Aorta (tissue), 5 donors: ENCODE measurements at regions of chr17 and their contacts with region 1.

Region 1: DNA sequence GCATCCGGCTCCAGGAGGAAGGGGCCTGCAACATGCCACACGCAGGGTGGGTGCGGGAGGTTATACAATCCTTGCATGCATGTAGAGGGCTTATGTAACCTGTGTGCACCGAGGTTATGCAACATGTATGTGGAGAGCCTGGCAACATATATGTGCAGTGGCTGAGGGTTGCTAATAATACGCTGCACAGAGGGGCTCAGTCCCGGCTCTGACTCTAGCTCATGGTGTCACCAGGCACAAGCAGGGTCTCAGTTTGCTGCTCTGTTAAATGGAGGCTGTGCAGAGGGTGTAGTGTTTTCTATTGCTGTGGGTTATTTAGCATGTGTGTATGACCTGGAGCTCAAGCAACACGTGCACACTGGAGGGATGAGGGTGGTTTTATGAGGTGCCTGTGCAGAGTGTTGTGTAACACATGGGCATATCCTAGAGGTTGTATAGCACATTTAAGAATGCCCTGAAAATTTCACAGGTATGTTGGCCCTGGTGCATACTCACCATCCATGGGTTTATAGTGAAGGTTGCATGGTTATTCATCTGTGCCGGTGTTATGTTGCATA is 13.3 kb downstream of the THRA start:
- DNase-seq: no peak
- ATAC-seq: no peak
- H3K4me3 ChIP-seq: no peak overlapping the region
- H3K27ac ChIP-seq: peak overlapping the region in 1 of 2 donors; percentile 65
- H3K4me1 ChIP-seq: peaks cover 0 to 3% of the 10 kb centered on the region in 2 donors
- H3K27me3 ChIP-seq: no peaks in the 10 kb centered on the region

Region 2: GRCh38 chr17:40026816-40027613 is 49.0 kb before region 1 on chr17:
- intact Hi-C with region 1: no loop called
- DNase-seq: peak; percentile 85 to 93
- ATAC-seq: peak; percentile 92
- H3K4me3 ChIP-seq: no peak overlapping the region
- H3K27ac ChIP-seq: no peak overlapping the region
- H3K4me1 ChIP-seq: no peaks in the 10 kb centered on the region
- H3K27me3 ChIP-seq: no peaks in the 10 kb centered on the region

Region 3: DNA sequence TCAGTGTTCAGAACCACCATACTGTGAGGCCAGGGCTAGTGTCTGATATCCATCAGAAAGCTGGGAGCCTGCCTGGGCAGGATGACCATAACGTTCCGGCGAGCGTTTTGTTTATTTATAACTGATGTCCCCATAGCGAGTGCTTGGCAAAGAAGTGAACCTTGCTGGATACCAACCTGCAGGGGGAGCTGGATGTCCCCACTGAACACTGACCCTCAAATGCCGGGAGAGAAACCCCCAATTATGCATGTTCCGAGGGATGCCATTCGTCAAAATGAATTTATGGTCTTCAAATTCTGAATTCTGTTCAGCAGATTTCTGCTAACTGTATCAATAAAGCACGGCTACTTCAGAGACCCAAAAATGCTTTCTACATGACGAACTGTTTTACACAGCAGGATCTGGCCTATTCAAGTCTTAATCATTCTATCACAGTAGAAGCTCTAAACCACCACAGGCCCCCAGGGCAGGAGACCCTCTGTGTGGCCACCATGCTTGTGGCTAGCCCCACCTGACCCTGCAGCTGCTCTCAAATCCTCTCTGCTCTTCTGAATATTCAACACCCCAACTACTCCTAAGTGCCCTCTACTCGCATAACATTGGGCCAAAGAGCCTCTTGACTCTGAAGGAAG is 37.0 kb before region 1 on chr17:
- intact Hi-C with region 1: no loop called
- DNase-seq: peak; percentile 80 to 85
- ATAC-seq: peak; percentile 91
- H3K4me3 ChIP-seq: no peak overlapping the region
- H3K27ac ChIP-seq: peak overlapping the region in 1 of 2 donors; percentile 85
- H3K4me1 ChIP-seq: no peaks in the 10 kb centered on the region
- H3K27me3 ChIP-seq: no peaks in the 10 kb centered on the region

Region 4: DNA sequence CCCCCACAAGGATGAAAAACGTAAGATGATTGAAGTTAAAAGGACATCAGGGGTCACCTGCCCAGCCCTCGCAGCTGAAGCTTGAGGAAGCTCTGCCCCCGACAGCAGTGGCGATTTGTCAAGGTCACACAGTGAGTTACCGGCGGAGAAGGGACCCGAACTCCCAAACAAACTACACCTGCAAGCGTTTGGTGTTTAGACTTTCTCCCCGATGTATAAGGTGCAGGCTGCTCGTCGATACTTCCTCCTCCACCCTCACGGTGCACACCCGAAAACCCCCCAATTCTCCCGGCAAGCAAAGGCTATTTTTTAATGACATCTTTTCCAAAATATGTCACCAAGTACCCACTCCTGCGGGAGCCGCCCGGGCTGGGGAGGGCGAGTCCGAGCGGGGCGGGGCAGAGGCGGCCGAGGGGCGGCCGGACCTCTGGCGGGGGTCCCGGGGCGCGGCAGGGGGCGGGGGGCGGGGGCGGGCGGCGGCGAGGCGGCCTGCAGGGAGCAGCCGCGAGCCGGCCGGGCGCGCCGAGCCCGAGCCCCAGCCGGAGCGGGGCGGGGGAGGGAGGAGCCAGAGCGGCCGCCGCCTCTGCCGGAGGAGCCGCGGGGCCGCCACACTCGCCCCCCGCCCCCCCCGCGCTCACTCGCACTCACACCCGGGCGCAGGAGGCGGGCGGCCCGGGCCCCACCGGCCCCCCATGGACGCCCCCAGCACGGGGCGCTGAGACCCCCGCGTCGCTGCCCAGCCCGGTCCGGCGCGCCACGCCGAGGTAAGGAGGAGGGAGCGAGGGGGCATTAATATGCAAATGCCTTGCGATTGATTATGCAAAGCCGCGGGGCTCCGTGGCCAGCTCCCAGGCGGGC is 13.5 kb before region 1 on chr17 and contains the start of gene THRA:
- intact Hi-C with region 1: loop called in 1 of 2 experiments (anchors 1 kb)
- DNase-seq: peak; percentile 82 to 91
- ATAC-seq: peak; percentile 66
- H3K4me3 ChIP-seq: peak within 1 kb of the TSS; percentile 89 to 98
- H3K27ac ChIP-seq: peak within 1 kb of the TSS in 1 of 2 donors; percentile 57
- H3K4me1 ChIP-seq: peaks cover 0 to 1% of the 10 kb centered on the region in 2 donors
- H3K27me3 ChIP-seq: no peaks in the 10 kb centered on the region
- total RNA-seq, gene THRA: 53.7 to 62.3 TPM